Caco-2 (cell line): ENCODE measurements at regions of chr5 and their contacts with region 1.

Region 1: DNA sequence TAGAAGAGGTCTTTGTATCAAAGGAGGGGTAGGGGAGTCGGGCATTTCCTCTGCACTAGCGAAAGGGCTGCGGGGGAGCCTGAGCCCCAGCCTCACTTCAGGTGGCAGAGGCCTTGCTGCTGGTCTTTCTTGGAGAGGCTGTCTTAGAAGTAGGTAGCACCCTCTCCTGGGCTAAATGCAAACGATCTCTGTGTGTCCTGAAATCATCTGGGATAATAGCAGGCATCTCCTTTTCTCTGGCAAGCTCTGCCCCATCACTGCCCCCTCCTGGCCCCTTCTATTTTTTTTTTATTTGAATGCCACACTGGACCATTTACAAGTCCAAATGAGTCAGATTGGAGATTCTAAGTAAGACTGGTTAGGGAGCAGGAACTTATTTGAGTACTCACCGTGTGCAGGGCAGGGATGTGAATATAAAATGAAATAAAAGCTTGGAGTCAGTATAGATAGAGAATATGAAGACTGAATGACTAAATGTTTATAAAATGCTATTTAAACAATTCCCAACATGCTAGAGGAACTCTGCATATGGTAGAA is 137.1 kb downstream of the FGF1 start:
- DNase-seq: peak; percentile 81 to 86
- H3K4me3 ChIP-seq: no peak overlapping the region
- H3K4me3 Mint-ChIP-seq: no peak overlapping the region
- H3K27ac Mint-ChIP-seq: no peak overlapping the region
- H3K4me1 ChIP-seq: peaks cover 8% of the 10 kb centered on the region
- H3K4me1 Mint-ChIP-seq: peaks cover 24% of the 10 kb centered on the region
- H3K27me3 ChIP-seq: no peaks in the 10 kb centered on the region; the same call in 1 of the 2 replicates
- H3K27me3 Mint-ChIP-seq: no peaks in the 10 kb centered on the region
- CTCF ChIP-seq: peak; percentile 87 to 90

Region 2: GRCh38 chr5:141992349-141992963 is 556.4 kb before region 1 on chr5:
- CTCF ChIA-PET with region 1: no interaction called
- POLR2A ChIA-PET with region 1: no interaction called
- intact Hi-C with region 1: loop called (anchors 10 kb)
- DNase-seq: peak; percentile 69 to 72
- H3K4me3 ChIP-seq: no peak overlapping the region
- H3K4me3 Mint-ChIP-seq: no peak overlapping the region
- H3K27ac Mint-ChIP-seq: no peak overlapping the region
- H3K4me1 ChIP-seq: no peaks in the 10 kb centered on the region
- H3K4me1 Mint-ChIP-seq: no peaks in the 10 kb centered on the region
- H3K27me3 ChIP-seq: no peaks in the 10 kb centered on the region
- H3K27me3 Mint-ChIP-seq: no peaks in the 10 kb centered on the region
- CTCF ChIP-seq: peak; percentile 65 to 70

Region 3: GRCh38 chr5:142167458-142167857 is 381.3 kb before region 1 on chr5:
- CTCF ChIA-PET with region 1: interaction called, 4 read pairs
- POLR2A ChIA-PET with region 1: no interaction called
- intact Hi-C with region 1: loop called (anchors 2 kb)
- DNase-seq: no peak
- H3K4me3 ChIP-seq: no peak overlapping the region
- H3K4me3 Mint-ChIP-seq: no peak overlapping the region
- H3K27ac Mint-ChIP-seq: no peak overlapping the region
- H3K4me1 ChIP-seq: peaks cover 32% of the 10 kb centered on the region
- H3K4me1 Mint-ChIP-seq: peaks cover 45% of the 10 kb centered on the region
- H3K27me3 ChIP-seq: no peaks in the 10 kb centered on the region
- H3K27me3 Mint-ChIP-seq: no peaks in the 10 kb centered on the region
- CTCF ChIP-seq: no peak

Region 4: DNA sequence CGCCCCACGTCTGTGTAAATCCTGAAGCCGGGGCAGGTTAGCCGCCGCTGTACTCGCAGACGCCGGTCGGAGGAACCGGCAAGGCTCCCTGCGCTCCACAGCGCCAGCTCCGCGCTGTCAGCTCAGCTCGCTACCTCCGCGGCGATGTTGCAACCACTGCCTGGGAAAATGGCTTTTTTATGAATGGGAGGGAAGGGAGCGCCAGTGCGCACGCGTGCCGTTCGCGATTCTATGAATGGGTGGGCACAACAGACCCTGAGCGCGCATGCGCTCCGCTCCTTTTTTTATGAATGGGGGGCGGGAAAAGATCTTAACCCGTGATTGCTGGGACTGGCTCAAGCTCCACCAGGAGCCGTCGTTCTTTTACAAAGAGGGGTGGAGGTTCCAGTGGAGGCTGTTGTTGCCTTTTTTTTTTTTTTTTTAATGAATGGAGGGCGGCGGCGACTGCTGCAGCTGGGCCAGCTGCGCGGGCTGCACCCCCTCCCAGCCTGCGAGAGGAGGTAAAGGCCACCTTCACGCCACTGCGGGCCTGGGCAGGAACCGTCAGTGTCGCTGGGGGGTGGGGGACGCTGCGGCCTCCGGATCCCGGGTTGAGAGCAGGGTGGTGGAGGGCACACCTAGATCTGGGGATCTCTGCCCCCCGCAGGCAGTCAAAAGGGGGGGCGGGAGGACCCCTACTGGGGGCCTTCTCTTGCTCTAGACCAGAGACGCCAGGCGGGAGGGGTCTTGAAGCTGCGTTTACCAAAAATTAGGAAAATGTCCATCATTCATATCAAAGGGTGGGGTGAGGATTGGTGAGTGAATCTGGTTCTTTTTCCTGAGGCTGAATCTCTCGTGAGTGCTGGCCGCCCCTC is 223.7 kb before region 1 on chr5 and contains the start of gene SPRY4:
- CTCF ChIA-PET with region 1: interaction called, 4 read pairs
- POLR2A ChIA-PET with region 1: no interaction called
- intact Hi-C with region 1: loop called (anchors 1 kb)
- DNase-seq: peak; percentile 97 to 98
- H3K4me3 ChIP-seq: peak within 1 kb of the TSS; percentile 83
- H3K4me3 Mint-ChIP-seq: peak within 1 kb of the TSS; percentile 89
- H3K27ac Mint-ChIP-seq: peak within 1 kb of the TSS; percentile 86
- H3K4me1 ChIP-seq: peaks cover 39% of the 10 kb centered on the region
- H3K4me1 Mint-ChIP-seq: peaks cover 41% of the 10 kb centered on the region
- H3K27me3 ChIP-seq: no peaks in the 10 kb centered on the region
- H3K27me3 Mint-ChIP-seq: no peaks in the 10 kb centered on the region
- CTCF ChIP-seq: peak in 1 of 2 experiments; percentile 17
- total RNA-seq, gene SPRY4: 7.7 and 8.3 TPM in 2 replicates

Region 5: GRCh38 chr5:142445218-142445617 is 103.6 kb before region 1 on chr5:
- CTCF ChIA-PET with region 1: no interaction called
- POLR2A ChIA-PET with region 1: no interaction called
- intact Hi-C with region 1: loop called (anchors 2 kb)
- DNase-seq: no peak
- H3K4me3 ChIP-seq: no peak overlapping the region
- H3K4me3 Mint-ChIP-seq: no peak overlapping the region
- H3K27ac Mint-ChIP-seq: no peak overlapping the region
- H3K4me1 ChIP-seq: peaks cover 19% of the 10 kb centered on the region
- H3K4me1 Mint-ChIP-seq: peaks cover 8% of the 10 kb centered on the region
- H3K27me3 ChIP-seq: no peaks in the 10 kb centered on the region
- H3K27me3 Mint-ChIP-seq: no peaks in the 10 kb centered on the region
- CTCF ChIP-seq: no peak

Region 6: GRCh38 chr5:142699184-142699720 is 150.4 kb after region 1 on chr5:
- CTCF ChIA-PET with region 1: interaction called, 3 read pairs
- POLR2A ChIA-PET with region 1: no interaction called
- intact Hi-C with region 1: loop called (anchors 5 kb)
- DNase-seq: peak; percentile 84 to 90
- H3K4me3 ChIP-seq: no peak overlapping the region
- H3K4me3 Mint-ChIP-seq: no peak overlapping the region
- H3K27ac Mint-ChIP-seq: no peak overlapping the region
- H3K4me1 ChIP-seq: no peaks in the 10 kb centered on the region
- H3K4me1 Mint-ChIP-seq: no peaks in the 10 kb centered on the region
- H3K27me3 ChIP-seq: no peaks in the 10 kb centered on the region; the same call in none of the 2 replicates
- H3K27me3 Mint-ChIP-seq: peaks cover 7% of the 10 kb centered on the region
- CTCF ChIP-seq: peak; percentile 93 to 97